Heart right ventricle (tissue), 16 donors: ENCODE measurements at regions of chr18 and their contacts with region 1.

Region 1: DNA sequence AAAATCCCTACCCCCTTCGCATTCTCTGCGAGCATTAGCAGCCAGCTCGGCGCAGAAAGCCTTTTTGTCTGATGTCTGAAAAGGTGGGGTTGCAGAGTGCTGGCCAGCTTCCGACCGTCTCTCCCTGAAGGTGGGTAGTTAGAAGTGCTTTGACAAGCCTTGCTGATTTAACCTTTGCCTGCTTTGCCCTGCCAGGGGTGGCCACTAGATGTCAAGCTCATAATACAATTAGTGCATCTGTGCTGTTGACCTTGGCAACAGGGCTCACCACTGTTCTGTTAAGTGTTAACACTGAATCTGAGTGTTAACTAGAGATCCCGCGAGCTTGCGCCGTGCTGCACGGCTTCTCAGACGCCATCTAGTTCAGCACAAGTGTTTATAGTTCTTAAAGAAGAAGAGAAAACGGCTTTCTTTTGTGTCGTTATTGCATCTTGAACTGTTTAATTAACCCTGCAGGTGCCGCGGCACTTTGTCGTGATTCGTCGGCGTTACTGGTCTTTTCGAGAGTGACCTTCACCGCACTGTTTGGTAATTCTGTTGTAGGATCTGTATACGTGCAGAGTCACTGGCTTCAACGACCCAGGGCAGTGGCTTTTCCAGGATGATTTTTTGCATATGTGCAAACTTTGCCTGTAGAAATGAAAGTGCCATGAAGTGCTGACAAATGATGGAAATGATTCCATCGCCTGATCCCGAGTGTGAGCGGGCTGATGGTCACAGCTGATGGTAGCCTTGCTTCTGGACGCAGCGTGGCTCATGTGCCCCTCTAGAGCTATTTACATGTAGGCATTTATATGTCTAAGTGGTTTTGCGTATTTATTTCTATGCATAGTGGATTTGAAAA is 5.5 kb downstream of the SALL3 start:
- DNase-seq: no peak
- ATAC-seq: peak in 2 of 8 donors; percentile 9 to 20
- H3K4me3 ChIP-seq: no peak overlapping the region
- H3K27ac ChIP-seq: no peak overlapping the region
- H3K4me1 ChIP-seq: peaks cover 0 to 16% (median 10%) of the 10 kb centered on the region in 9 donors
- H3K27me3 ChIP-seq: peaks cover 35 to 100% (median 96%) of the 10 kb centered on the region in 7 donors
- CTCF ChIP-seq: peak in 3 of 9 donors; percentile 4 to 13 (median 9)

Region 2: DNA sequence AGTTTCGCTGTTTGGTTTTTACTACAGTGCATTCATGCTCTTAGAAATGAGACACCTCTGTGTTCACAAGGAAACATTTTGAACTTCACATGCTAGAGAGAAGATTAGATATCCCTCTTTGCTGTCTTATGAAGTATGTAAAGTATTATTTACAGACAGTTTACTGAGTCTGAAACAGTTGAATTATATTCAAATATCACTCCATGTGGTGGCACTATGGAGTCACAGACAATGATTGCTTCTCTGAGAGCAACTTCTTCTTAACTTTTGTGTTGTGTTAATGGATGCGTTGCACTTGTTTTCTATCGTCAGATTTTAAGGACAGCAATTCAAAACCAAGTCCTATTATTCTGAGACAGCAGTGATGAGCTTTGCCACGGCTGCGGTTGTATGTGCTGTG is 911.9 kb before region 1 on chr18:
- intact Hi-C with region 1: loop called in 1 of 10 experiments (anchors 10 kb)
- DNase-seq: no peak
- ATAC-seq: no peak
- H3K4me3 ChIP-seq: no peak overlapping the region
- H3K27ac ChIP-seq: no peak overlapping the region
- H3K4me1 ChIP-seq: no peaks in the 10 kb centered on the region
- H3K27me3 ChIP-seq: peaks cover 0 to 27% (median 5%) of the 10 kb centered on the region in 7 donors
- CTCF ChIP-seq: peak in 4 of 9 donors; percentile 23 to 39 (median 34)

Region 3: DNA sequence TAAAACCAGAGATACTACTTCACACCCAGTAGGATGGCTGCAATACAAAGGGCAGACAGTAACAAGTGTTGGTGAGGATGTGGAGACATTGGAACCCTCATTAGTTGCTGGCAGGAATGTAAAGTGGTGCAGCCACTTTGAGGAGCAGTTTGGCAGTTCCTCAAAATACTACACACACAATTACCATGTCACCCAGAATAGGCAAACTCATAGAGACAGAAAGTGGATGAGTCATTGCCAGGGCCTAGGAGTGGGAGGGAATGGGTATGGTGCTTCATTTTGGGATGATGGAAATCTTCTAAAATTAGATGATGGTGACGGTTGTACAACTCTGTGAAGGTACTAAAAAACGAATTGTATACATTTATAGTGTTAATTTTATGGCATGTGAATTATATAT is 138.8 kb after region 1 on chr18:
- intact Hi-C with region 1: no loop called
- DNase-seq: no peak
- ATAC-seq: peak in 2 of 8 donors; percentile 18 to 26
- H3K4me3 ChIP-seq: no peak overlapping the region
- H3K27ac ChIP-seq: no peak overlapping the region
- H3K4me1 ChIP-seq: no peaks in the 10 kb centered on the region
- H3K27me3 ChIP-seq: no peaks in the 10 kb centered on the region
- CTCF ChIP-seq: no peak